Activated B cell treated with CpG ODN at 0.5 μM for 24 hours (primary cell): ENCODE measurements at regions of chr20 and their contacts with region 1.

Region 1: DNA sequence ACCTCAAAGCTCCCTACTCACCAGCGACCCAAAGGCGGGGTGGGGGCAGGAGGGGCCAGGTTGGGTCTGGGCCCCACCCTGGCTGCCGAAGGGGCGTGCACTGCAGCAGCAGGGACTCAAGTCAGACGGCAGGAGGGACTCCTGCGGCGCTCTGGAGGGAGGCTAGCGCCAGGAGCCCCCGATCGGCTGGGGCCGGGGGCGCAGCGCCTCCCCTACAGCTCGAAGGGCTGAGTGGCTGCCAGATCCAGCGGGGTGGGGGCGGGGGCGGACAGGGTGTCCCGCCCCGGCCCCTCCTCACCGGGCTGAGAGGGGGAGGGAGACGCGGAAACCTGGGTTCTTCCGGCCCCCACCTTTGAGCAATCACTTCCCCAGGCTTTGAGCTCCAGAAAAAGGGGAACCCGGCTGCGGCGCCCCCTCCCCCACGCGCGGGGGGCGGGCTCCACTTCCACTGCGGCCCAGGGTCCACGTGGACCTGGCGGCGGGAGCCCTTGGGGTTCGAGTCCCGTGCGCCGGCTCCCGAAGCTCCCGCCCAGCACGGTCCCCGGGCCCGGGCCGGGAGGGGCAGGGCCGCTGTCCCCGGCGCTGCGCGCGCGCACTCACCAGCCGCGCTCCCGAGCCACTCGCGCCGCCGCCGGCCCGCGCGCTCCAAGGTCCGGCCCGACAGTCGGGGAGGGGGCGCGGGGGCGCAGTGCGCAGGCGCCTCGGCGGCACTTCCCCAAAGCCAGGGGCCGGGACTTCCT is at the start of gene RGS19:
- DNase-seq: peak; percentile 86
- ATAC-seq: peak; percentile 49
- H3K4me3 Mint-ChIP-seq: peak within 1 kb of the TSS; percentile 87
- H3K27ac Mint-ChIP-seq: peak within 1 kb of the TSS; percentile 89
- H3K4me1 Mint-ChIP-seq: peaks cover 68% of the 10 kb centered on the region
- H3K27me3 Mint-ChIP-seq: peaks cover 3% of the 10 kb centered on the region
- CTCF ChIP-seq: no peak
- total RNA-seq, gene RGS19: 45.0 and 53.4 TPM in 2 replicates

Region 2: DNA sequence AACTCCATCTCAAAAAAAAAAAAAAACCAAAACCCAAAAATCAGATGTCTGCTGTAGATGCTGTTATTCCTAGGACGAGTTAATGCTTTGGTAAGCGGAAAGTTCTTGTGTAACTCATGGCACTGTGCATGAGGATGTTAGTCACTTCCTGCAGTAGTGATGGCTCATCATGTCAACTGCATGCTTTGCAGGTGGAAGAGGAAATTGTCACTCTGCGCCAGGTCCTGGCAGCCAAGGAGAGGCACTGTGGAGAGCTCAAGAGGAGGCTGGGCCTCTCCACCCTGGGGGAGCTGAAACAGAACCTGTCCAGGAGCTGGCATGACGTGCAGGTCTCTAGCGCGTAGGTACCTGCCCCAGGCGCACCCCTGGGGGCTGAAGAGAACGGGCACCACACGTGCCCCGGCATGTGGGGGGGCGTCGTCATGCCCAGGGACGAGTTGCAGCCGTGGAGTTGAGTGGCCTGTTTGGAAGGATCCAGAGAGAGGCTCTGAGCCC is 205.9 kb before region 1 on chr20:
- CTCF ChIA-PET with region 1: no interaction called
- POLR2A ChIA-PET with region 1: no interaction called
- intact Hi-C with region 1: no loop called
- DNase-seq: no peak
- ATAC-seq: no peak
- H3K4me3 Mint-ChIP-seq: no peak overlapping the region
- H3K27ac Mint-ChIP-seq: no peak overlapping the region
- H3K4me1 Mint-ChIP-seq: no peaks in the 10 kb centered on the region
- H3K27me3 Mint-ChIP-seq: no peaks in the 10 kb centered on the region
- CTCF ChIP-seq: no peak

Region 3: GRCh38 chr20:63980806-63981728 is 98.4 kb before region 1 on chr20 and contains the start of gene PRPF6:
- CTCF ChIA-PET with region 1: interaction called, 6 read pairs
- POLR2A ChIA-PET with region 1: interaction called, 16 read pairs
- intact Hi-C with region 1: loop called (anchors 5 kb)
- DNase-seq: peak; percentile 90
- ATAC-seq: peak; percentile 65
- H3K4me3 Mint-ChIP-seq: peak within 1 kb of the TSS; percentile 92
- H3K27ac Mint-ChIP-seq: peak within 1 kb of the TSS; percentile 94
- H3K4me1 Mint-ChIP-seq: peaks cover 50% of the 10 kb centered on the region
- H3K27me3 Mint-ChIP-seq: no peaks in the 10 kb centered on the region
- CTCF ChIP-seq: peak; percentile 25
- total RNA-seq, gene PRPF6: 75.7 and 75.8 TPM in 2 replicates

Region 4: DNA sequence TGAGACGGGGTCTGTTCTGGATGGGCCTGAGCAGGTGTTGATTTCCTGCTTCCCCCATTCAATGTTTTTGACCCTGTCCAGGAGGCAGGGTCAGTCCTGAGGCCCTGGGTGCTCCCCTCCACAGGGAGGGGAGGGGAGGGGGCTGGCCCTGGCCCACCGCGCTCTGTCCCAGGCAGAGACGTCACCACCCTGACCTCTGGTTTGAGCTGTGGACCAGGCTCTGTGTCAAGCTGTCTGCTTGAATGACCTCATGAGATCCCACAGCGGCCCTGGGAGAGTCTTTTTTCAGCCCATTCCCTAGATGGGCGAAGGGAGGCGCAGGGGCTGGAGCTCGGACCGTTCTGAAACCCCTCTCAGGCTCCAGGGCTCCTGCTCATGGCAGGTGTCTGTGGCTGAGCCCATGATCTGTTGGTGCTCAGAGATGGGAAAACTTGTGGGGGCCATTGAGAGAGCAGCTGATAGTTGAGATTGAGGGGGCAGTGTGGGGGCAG is 13.6 kb after region 1 on chr20:
- CTCF ChIA-PET with region 1: no interaction called
- POLR2A ChIA-PET with region 1: interaction called, 15 read pairs
- intact Hi-C with region 1: no loop called
- DNase-seq: no peak
- ATAC-seq: peak; percentile 18
- H3K4me3 Mint-ChIP-seq: no peak overlapping the region
- H3K27ac Mint-ChIP-seq: no peak overlapping the region
- H3K4me1 Mint-ChIP-seq: peaks cover 18% of the 10 kb centered on the region
- H3K27me3 Mint-ChIP-seq: no peaks in the 10 kb centered on the region
- CTCF ChIP-seq: no peak

Region 5: DNA sequence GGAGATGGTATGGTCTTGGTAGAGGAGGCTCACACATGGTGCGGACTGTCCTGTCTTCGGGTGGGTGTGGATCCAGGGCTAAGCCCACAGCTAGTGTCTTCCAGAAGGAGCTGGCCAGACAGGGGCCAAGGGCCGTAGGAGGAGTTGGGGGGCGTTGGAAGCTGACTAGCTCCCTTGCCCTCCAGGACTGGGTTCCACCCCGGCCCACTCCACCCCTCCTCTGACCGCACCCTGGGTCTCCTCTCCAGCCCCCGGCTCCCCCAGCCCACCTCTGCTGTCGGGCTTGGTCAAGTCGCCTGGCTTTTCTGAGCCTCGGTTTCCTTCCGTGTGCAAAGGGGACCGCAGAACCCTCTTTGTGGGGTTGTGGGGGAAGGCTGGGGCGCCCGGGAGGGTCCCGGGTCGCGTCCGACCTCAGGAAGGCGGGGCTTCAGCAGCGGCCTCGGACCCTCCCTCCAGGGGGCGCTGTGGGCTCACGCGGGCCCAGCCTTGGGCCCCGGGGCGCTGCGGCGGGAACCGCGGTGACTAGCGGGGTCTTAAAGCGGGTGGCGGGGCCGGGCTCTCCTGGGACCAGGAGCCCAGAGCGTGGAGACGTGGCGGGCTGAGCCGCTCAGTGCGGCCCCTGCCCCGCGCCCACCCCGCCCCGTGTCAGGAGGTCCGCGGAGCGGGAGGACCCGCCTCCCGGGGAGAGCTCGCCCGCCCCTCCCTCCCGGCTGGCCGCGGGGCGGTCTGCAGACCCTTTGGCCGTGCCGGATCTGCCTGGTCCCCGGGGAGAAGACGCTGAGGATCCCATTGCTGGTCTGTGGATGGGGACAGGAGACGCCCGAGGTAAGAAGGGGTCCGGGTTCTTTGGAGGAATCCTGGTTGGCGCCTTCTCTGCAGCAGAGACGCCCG is 22.5 kb after region 1 on chr20:
- CTCF ChIA-PET with region 1: interaction called, 18 read pairs
- POLR2A ChIA-PET with region 1: interaction called, 27 read pairs
- intact Hi-C with region 1: loop called (anchors 1 kb)
- DNase-seq: peak; percentile 81
- ATAC-seq: peak; percentile 42
- H3K4me3 Mint-ChIP-seq: peak overlapping the region; percentile 82
- H3K27ac Mint-ChIP-seq: no peak overlapping the region
- H3K4me1 Mint-ChIP-seq: peaks cover 32% of the 10 kb centered on the region
- H3K27me3 Mint-ChIP-seq: peaks cover 5% of the 10 kb centered on the region
- CTCF ChIP-seq: no peak

Region 6: GRCh38 chr20:64106981-64107735 is 27.7 kb after region 1 on chr20 and contains the start of gene NPBWR2:
- CTCF ChIA-PET with region 1: interaction called, 18 read pairs
- POLR2A ChIA-PET with region 1: interaction called, 12 read pairs
- intact Hi-C with region 1: no loop called
- DNase-seq: no peak
- ATAC-seq: peak; percentile 72
- H3K4me3 Mint-ChIP-seq: peak within 1 kb of the TSS; percentile 74
- H3K27ac Mint-ChIP-seq: peak within 1 kb of the TSS; percentile 87
- H3K4me1 Mint-ChIP-seq: peaks cover 34% of the 10 kb centered on the region
- H3K27me3 Mint-ChIP-seq: peaks cover 5% of the 10 kb centered on the region
- CTCF ChIP-seq: no peak
- total RNA-seq, gene NPBWR2: not detected in 2 replicates

Region 7: DNA sequence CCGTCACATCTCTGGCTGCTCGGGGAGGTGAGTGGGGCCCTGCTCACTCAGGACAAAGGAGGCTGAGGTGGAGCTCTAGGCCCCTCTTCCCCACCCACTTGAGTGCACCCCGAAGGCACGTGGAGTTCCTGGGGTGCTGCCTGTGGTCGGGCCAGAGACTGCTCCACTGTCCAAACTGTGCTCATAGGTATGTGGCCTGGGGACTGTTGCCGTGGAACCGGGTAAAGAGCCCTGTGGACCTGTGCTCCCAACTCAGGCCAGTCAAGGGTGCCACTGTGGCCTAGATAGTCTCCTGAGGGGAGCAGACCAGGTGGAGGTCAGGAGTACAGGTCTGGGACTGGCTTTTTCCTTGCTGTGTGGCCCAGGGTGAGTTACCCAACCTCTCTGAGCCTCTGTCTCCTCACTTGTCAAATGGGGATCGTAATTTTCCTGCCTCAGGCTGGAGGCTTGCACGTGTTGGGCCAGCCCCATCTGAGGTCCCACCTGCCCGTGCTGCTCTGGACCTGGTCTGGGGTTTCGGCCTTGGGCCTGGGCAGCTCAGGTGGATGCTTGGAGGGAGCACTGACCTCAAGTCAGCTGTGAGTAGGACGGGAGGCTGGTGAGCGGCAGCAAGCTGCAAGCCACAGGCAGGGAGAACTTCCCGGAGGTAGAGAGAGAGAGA is 40.4 kb after region 1 on chr20:
- CTCF ChIA-PET with region 1: interaction called, 80 read pairs
- POLR2A ChIA-PET with region 1: interaction called, 23 read pairs
- intact Hi-C with region 1: loop called (anchors 1 kb)
- DNase-seq: no peak
- ATAC-seq: peak; percentile 5
- H3K4me3 Mint-ChIP-seq: peak overlapping the region; percentile 71
- H3K27ac Mint-ChIP-seq: peak overlapping the region; percentile 78
- H3K4me1 Mint-ChIP-seq: peaks cover 8% of the 10 kb centered on the region
- H3K27me3 Mint-ChIP-seq: peaks cover 5% of the 10 kb centered on the region
- CTCF ChIP-seq: no peak